CD14-positive monocyte (primary cell): ENCODE measurements at regions of chr14 and their contacts with region 1.

Region 1: GRCh38 chr14:23727566-23728335 is 91.6 kb downstream of the DHRS2 start:
- DNase-seq: peak; percentile 9 to 24 (median 18)
- H3K4me3 ChIP-seq: no peak overlapping the region
- H3K4me3 Mint-ChIP-seq: no peak overlapping the region
- H3K27ac ChIP-seq: no peak overlapping the region
- H3K27ac Mint-ChIP-seq: no peak overlapping the region
- H3K4me1 ChIP-seq: no peaks in the 10 kb centered on the region
- H3K4me1 Mint-ChIP-seq: no peaks in the 10 kb centered on the region
- H3K27me3 ChIP-seq: no peaks in the 10 kb centered on the region
- H3K27me3 Mint-ChIP-seq: peaks cover 0 to 3% (median 1%) of the 10 kb centered on the region in 3 donors
- CTCF ChIP-seq: peak; percentile 60

Region 2: DNA sequence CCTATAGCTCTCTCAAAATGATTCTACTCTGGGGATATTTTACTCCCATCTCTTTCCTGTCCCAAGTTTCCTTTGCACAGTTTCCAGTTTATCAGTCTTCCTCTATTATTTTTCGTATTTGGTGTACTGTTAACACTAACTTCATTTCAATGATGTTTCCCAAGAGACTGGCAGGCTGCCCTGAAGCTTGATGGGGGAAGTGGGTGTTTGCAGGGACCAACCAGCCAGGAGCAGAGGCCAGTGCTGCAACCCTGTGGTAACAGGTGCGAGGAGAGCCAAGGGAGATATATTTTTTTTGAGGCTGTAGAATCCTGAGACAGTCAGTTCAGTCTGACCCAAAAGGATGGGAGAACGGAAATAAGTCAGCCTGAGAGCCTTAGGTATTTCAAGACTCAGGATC is 596.9 kb before region 1 on chr14:
- intact Hi-C with region 1: no loop called
- DNase-seq: no peak
- H3K4me3 ChIP-seq: no peak overlapping the region
- H3K4me3 Mint-ChIP-seq: no peak overlapping the region
- H3K27ac ChIP-seq: no peak overlapping the region
- H3K27ac Mint-ChIP-seq: peak overlapping the region in 1 of 7 donors; percentile 33
- H3K4me1 ChIP-seq: peaks cover 20 to 36% of the 10 kb centered on the region in 2 donors
- H3K4me1 Mint-ChIP-seq: peaks cover 32% of the 10 kb centered on the region
- H3K27me3 ChIP-seq: no peaks in the 10 kb centered on the region
- H3K27me3 Mint-ChIP-seq: peaks cover 0 to 2% (median 1%) of the 10 kb centered on the region in 3 donors
- CTCF ChIP-seq: no peak

Region 3: GRCh38 chr14:23929822-23930294 is 202.1 kb after region 1 on chr14:
- intact Hi-C with region 1: loop called in 1 of 2 experiments (anchors 5 kb)
- DNase-seq: peak; percentile 54 to 74 (median 70)
- H3K4me3 ChIP-seq: no peak overlapping the region
- H3K4me3 Mint-ChIP-seq: no peak overlapping the region
- H3K27ac ChIP-seq: no peak overlapping the region
- H3K27ac Mint-ChIP-seq: no peak overlapping the region
- H3K4me1 ChIP-seq: no peaks in the 10 kb centered on the region
- H3K4me1 Mint-ChIP-seq: no peaks in the 10 kb centered on the region
- H3K27me3 ChIP-seq: no peaks in the 10 kb centered on the region
- H3K27me3 Mint-ChIP-seq: peaks cover 0 to 7% (median 0%) of the 10 kb centered on the region in 3 donors
- CTCF ChIP-seq: peak; percentile 98